HAP-1 (cell line): ENCODE measurements at regions of chr7 and their contacts with region 1.

Region 1: DNA sequence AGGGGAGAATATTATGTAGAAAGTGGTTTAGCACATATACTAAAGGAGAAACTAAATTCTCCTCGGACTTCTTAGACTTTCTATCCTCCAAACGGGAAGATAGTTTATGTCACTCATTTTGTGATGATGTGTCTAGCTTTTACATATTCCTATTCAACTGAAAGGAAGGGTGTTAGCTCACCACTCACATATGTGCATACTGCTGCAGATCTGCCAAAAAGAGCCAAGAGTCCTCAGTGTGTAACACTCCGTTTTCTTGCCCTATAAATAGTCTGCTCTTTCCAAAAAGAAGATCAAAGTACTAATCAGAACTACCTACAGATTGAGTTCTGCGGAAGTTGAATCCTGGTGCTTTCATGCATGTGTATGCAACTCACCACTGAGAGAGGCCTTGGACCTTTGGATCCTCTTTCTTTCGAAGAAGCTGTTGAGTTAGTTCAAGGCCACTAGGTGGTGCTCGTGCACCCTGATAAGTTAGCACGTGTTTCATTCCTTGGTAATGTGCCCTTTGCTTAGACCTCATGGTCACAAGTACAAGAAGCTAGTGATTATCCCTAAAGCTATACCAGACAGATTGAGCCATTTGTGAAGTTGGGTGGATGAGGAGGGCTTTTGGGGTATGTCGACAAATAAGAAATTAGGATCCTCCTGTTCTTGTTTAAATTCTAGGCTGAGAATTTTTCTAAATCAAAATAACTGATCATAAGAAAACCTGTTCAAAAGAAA is 14.1 kb downstream of the YAE1 start:
- DNase-seq: peak; percentile 82 to 91
- H3K4me3 ChIP-seq: no peak overlapping the region
- H3K4me1 ChIP-seq: no peaks in the 10 kb centered on the region
- H3K27me3 ChIP-seq: no peaks in the 10 kb centered on the region

Region 2: GRCh38 chr7:39746103-39746819 is 165.9 kb after region 1 on chr7:
- in situ Hi-C with region 1: loop called (anchors 5 kb)
- DNase-seq: peak; percentile 81 to 83
- H3K4me3 ChIP-seq: no peak overlapping the region
- H3K4me1 ChIP-seq: no peaks in the 10 kb centered on the region; the same call in 1 of the 2 replicates
- H3K27me3 ChIP-seq: no peaks in the 10 kb centered on the region

Region 3: GRCh38 chr7:40057292-40057691 is 477.0 kb after region 1 on chr7:
- in situ Hi-C with region 1: loop called (anchors 25 kb)
- DNase-seq: no peak
- H3K4me3 ChIP-seq: no peak overlapping the region
- H3K4me1 ChIP-seq: no peaks in the 10 kb centered on the region
- H3K27me3 ChIP-seq: no peaks in the 10 kb centered on the region